Naive thymus-derived CD4-positive, alpha-beta T cell (primary cell): ENCODE measurements at regions of chr12 and their contacts with region 1.

Region 1: GRCh38 chr12:26832822-26833742 is at the start of gene ITPR2:
- DNase-seq: peak; percentile 81 to 94 (median 89)
- ATAC-seq: peak; percentile 96
- H3K4me3 ChIP-seq: peak within 1 kb of the TSS; percentile 96
- H3K4me3 Mint-ChIP-seq: peak within 1 kb of the TSS; percentile 92 to 100 (median 98)
- H3K27ac ChIP-seq: peak within 1 kb of the TSS; percentile 92
- H3K27ac Mint-ChIP-seq: peak within 1 kb of the TSS; percentile 95 to 99 (median 98)
- H3K4me1 ChIP-seq: peaks cover 12 to 16% of the 10 kb centered on the region in 2 donors
- H3K4me1 Mint-ChIP-seq: peaks cover 26 to 51% (median 45%) of the 10 kb centered on the region in 7 donors
- H3K27me3 ChIP-seq: no peaks in the 10 kb centered on the region
- H3K27me3 Mint-ChIP-seq: no peaks in the 10 kb centered on the region
- total RNA-seq, gene ITPR2: 44.9 to 71.5 (median 59.2) TPM

Region 2: GRCh38 chr12:26113853-26114719 is 719.0 kb before region 1 on chr12:
- CTCF ChIA-PET with region 1: no interaction called
- POLR2A ChIA-PET with region 1: interaction called, 3 read pairs
- intact Hi-C with region 1: loop called in 1 of 2 experiments (anchors 1 kb)
- DNase-seq: peak; percentile 48 to 70 (median 65)
- ATAC-seq: peak; percentile 88
- H3K4me3 ChIP-seq: peak overlapping the region; percentile 53
- H3K4me3 Mint-ChIP-seq: peak overlapping the region; percentile 72 to 90 (median 82)
- H3K27ac ChIP-seq: peak overlapping the region; percentile 54
- H3K27ac Mint-ChIP-seq: peak overlapping the region in 7 of 9 donors; percentile 44 to 83 (median 63)
- H3K4me1 ChIP-seq: peaks cover 0 to 5% of the 10 kb centered on the region in 2 donors
- H3K4me1 Mint-ChIP-seq: peaks cover 5 to 14% (median 8%) of the 10 kb centered on the region in 7 donors
- H3K27me3 ChIP-seq: no peaks in the 10 kb centered on the region
- H3K27me3 Mint-ChIP-seq: peaks cover 2 to 80% (median 32%) of the 10 kb centered on the region in 5 donors

Region 3: GRCh38 chr12:26791301-26791791 is 41.7 kb before region 1 on chr12:
- CTCF ChIA-PET with region 1: no interaction called
- POLR2A ChIA-PET with region 1: no interaction called
- intact Hi-C with region 1: loop called in 1 of 2 experiments (anchors 2 kb)
- DNase-seq: no peak
- ATAC-seq: peak; percentile 79
- H3K4me3 ChIP-seq: no peak overlapping the region
- H3K4me3 Mint-ChIP-seq: no peak overlapping the region
- H3K27ac ChIP-seq: no peak overlapping the region
- H3K27ac Mint-ChIP-seq: no peak overlapping the region
- H3K4me1 ChIP-seq: peaks cover 0 to 13% of the 10 kb centered on the region in 2 donors
- H3K4me1 Mint-ChIP-seq: peaks cover 12 to 41% (median 30%) of the 10 kb centered on the region in 7 donors
- H3K27me3 ChIP-seq: no peaks in the 10 kb centered on the region
- H3K27me3 Mint-ChIP-seq: no peaks in the 10 kb centered on the region

Region 4: DNA sequence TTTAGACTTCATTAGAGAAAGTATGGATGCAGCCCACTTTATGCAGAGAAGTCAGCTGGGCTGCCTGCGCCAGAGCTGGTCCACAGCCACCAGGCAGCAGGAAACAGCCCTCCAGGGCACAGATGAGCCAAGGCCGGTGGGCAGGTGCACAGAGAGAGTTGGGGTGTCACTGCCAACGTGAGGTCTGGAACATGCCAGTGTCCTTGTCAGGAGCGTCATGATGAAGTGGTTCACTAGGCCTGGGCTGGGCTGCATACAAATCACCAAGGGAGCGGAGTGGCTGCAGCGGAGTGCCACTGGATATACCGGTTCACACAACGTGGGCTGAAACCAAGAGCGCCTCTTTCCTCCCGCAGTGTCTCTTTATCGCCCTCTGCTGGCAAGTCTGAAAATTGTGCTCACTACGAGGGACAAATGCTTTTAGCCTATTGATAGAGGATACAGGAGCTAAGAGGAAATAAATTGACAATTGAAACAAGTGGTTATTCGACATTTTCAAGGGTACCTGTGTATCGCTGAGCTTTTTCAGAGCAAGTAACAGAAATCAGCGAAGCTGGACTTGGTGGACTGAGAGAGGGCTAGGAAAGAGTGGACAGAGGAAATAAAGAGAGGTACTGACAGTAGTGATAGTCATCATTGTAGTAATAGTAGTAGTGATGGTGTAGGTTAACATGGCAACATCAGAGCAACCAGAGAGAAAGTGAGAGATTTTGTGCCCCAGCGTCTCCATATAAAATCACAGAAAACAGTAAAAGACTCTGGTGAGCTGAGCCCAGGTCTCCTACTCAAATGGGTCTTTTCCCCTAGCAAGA is 51.9 kb after region 1 on chr12:
- CTCF ChIA-PET with region 1: no interaction called
- POLR2A ChIA-PET with region 1: no interaction called
- intact Hi-C with region 1: loop called (anchors 1 kb)
- DNase-seq: peak; percentile 62 to 88 (median 81)
- ATAC-seq: peak; percentile 99
- H3K4me3 ChIP-seq: peak overlapping the region; percentile 46
- H3K4me3 Mint-ChIP-seq: peak overlapping the region; percentile 46 to 80 (median 64)
- H3K27ac ChIP-seq: no peak overlapping the region
- H3K27ac Mint-ChIP-seq: no peak overlapping the region
- H3K4me1 ChIP-seq: peaks cover 0 to 3% of the 10 kb centered on the region in 2 donors
- H3K4me1 Mint-ChIP-seq: peaks cover 4 to 13% (median 7%) of the 10 kb centered on the region in 7 donors
- H3K27me3 ChIP-seq: no peaks in the 10 kb centered on the region
- H3K27me3 Mint-ChIP-seq: peaks cover 3 to 26% (median 6%) of the 10 kb centered on the region in 5 donors

Region 5: DNA sequence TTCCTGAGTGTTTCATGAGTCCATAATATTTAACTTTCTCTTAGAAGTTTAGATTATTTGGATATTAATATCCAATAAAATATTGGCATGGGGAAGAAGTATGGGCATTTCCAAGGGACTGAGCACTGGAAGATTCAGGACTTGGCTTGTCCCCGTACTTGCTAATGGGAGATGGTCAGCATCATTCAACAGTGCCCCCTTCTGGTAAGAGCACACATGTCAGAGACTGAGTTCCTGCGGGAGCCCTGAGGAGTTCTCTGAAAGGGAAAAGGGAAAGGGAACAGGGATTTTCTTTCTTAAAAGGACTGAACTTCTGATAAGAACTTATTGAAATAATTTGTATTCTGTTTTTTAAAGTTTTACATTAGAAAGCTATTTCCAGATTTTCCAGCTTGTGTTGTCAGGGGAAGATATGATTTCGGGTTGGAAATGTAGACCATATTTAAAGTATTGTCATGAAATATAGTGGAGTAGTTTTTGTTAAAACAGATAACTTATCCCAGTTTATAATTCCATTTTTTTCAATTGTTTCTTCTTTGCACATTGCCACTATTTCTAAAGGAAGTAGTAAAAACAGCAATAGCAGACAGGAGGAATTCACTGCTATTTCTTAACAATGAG is 309.1 kb after region 1 on chr12:
- CTCF ChIA-PET with region 1: no interaction called
- POLR2A ChIA-PET with region 1: no interaction called
- intact Hi-C with region 1: loop called in 1 of 2 experiments (anchors 10 kb)
- DNase-seq: peak in 7 of 9 donors; percentile 7 to 32 (median 15)
- ATAC-seq: peak; percentile 80
- H3K4me3 ChIP-seq: no peak overlapping the region
- H3K4me3 Mint-ChIP-seq: no peak overlapping the region
- H3K27ac ChIP-seq: no peak overlapping the region
- H3K27ac Mint-ChIP-seq: no peak overlapping the region
- H3K4me1 ChIP-seq: no peaks in the 10 kb centered on the region
- H3K4me1 Mint-ChIP-seq: peaks cover 1 to 30% (median 11%) of the 10 kb centered on the region in 7 donors
- H3K27me3 ChIP-seq: no peaks in the 10 kb centered on the region
- H3K27me3 Mint-ChIP-seq: peaks cover 0 to 5% (median 0%) of the 10 kb centered on the region in 5 donors

Region 6: DNA sequence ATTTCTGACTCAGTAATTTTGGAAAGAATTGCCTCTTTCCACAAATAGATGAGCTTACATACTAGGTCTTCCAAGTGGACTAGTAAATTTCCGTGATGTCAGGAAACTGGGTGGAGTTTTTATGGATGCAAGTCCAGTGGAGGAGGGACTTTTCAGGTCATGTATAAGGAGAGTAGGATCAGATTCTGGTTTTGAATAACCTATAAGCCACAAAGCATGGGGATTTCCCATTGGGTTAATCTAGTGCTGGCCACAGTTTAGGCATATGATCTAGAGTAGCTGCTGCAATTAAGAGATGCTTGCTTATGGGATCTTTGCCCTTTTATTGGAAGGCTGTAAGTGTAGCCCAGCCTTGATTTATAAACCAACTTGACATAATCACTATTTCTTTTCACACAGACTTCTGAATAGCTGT is 444.8 kb after region 1 on chr12:
- CTCF ChIA-PET with region 1: no interaction called
- POLR2A ChIA-PET with region 1: no interaction called
- intact Hi-C with region 1: no loop called
- DNase-seq: no peak
- ATAC-seq: no peak
- H3K4me3 ChIP-seq: no peak overlapping the region
- H3K4me3 Mint-ChIP-seq: no peak overlapping the region
- H3K27ac ChIP-seq: no peak overlapping the region
- H3K27ac Mint-ChIP-seq: no peak overlapping the region
- H3K4me1 ChIP-seq: no peaks in the 10 kb centered on the region
- H3K4me1 Mint-ChIP-seq: peaks cover 11 to 46% (median 35%) of the 10 kb centered on the region in 7 donors
- H3K27me3 ChIP-seq: no peaks in the 10 kb centered on the region
- H3K27me3 Mint-ChIP-seq: no peaks in the 10 kb centered on the region

Region 7: DNA sequence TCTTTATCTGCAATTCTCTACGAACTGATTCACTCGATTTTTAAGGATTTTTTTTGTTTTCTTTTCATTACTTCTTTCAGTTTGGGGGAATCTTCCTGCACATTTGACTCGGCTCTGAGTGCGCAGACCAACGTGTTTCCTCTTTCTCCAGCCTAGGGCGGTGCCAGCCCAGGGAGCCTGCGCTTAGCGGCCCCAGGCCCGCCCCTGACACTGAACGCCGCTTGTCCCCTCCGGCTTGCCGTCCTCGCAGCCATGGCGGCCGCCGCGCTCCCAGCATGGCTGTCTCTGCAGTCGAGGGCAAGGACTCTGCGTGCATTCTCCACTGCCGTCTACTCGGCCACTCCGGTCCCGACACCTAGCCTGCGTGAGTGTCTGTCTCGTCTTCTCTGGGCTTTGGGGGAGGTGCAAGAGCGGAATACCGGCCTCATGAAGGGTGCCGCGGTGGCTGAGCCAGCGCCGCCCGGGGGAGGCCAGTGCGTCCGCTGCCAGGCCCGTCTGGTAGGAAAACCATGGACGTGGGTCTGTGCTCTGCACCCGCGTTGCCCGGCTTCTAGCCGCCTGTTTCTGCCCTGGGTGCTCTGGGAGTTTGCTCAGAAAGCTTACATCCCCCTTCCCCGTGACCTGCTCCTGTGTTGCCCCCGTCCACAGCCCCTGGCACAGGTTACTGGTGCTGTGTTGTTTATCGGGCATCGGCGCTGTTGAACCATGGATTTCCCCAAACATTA is 877.7 kb after region 1 on chr12 and contains the start of gene MRPS35:
- CTCF ChIA-PET with region 1: no interaction called
- POLR2A ChIA-PET with region 1: no interaction called
- intact Hi-C with region 1: loop called (anchors 2 to 5 kb)
- DNase-seq: peak; percentile 86 to 94 (median 92)
- ATAC-seq: peak; percentile 100
- H3K4me3 ChIP-seq: peak within 1 kb of the TSS; percentile 98
- H3K4me3 Mint-ChIP-seq: peak within 1 kb of the TSS; percentile 94 to 100 (median 98)
- H3K27ac ChIP-seq: peak within 1 kb of the TSS; percentile 85
- H3K27ac Mint-ChIP-seq: peak within 1 kb of the TSS; percentile 91 to 100 (median 98)
- H3K4me1 ChIP-seq: peaks cover 7 to 13% of the 10 kb centered on the region in 2 donors
- H3K4me1 Mint-ChIP-seq: peaks cover 21 to 46% (median 39%) of the 10 kb centered on the region in 7 donors
- H3K27me3 ChIP-seq: no peaks in the 10 kb centered on the region
- H3K27me3 Mint-ChIP-seq: peaks cover 0 to 18% (median 0%) of the 10 kb centered on the region in 5 donors
- total RNA-seq, gene MRPS35: 19.9 to 35.7 (median 23.5) TPM